Endothelial cell of umbilical vein (primary cell): ENCODE measurements at regions of chr12 and their contacts with region 1.

Region 1: GRCh38 chr12:30795410-30796312 is 40.9 kb upstream of the CAPRIN2 start:
- DNase-seq: peak; percentile 80
- H3K4me3 ChIP-seq: peak overlapping the region; percentile 16 to 76 (median 56)
- H3K27ac ChIP-seq: peak overlapping the region; percentile 97
- H3K4me1 ChIP-seq: peaks cover 39% of the 10 kb centered on the region
- H3K27me3 ChIP-seq: no peaks in the 10 kb centered on the region
- CTCF ChIP-seq: peak in 1 of 2 donors; percentile 14
- POLR2A ChIP-seq: peak; percentile 83

Region 2: DNA sequence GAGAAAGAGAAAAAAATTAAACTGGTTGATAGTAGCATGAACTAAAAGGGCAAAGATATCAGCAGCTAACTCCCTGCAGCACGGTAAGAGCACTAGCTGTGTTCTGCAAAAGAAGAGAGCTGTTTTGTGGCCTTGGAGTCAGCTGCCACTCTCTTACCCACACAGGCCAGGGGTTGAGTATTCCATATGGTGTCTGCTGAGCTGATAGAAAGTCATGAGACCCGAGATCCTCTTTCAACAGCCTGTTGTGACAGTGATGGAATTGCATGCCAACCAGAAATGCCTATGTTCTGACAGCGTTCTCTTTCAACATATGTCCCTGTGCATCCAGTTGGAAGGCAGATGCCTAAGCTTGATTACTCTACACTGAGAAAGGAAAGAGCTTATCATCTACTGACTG is 1051.9 kb before region 1 on chr12:
- CTCF ChIA-PET with region 1: no interaction called
- POLR2A ChIA-PET with region 1: no interaction called
- dilution Hi-C with region 1: no loop called
- intact Hi-C with region 1: loop called (anchors 5 kb)
- DNase-seq: peak; percentile 39
- H3K4me3 ChIP-seq: no peak overlapping the region
- H3K27ac ChIP-seq: no peak overlapping the region
- H3K4me1 ChIP-seq: peaks cover 19% of the 10 kb centered on the region
- H3K27me3 ChIP-seq: no peaks in the 10 kb centered on the region
- CTCF ChIP-seq: no peak
- POLR2A ChIP-seq: no peak

Region 3: DNA sequence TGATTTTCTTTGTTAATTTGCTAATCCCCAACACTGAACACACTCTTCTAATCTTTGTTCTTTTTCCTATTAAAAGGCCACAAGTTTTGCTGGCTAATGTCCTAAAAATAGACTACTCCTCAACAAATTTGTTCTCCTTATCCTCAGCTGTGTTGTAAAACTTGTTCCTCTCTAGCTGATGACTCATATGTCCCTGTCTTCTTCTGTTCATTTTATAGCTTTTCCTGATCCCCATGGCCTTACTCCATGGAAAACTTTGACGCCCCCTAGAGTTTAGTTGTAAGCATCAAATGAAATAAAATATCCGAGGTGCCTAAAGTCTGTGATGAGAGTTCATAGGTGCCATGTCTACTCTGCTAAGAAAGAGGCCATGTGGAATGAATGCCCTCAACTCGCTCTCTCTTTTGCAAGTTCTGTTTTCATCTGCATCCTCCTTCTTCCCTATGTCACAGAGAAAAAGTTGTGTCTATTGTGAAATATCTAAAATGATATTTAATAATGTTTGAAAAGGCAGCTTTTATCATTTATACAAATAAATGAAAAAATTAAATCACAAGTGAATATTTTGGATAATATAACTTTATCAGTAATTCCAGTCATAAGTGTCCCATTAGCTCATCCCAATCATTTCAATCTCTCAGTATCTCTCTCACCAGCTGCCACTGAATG is 337.9 kb before region 1 on chr12:
- CTCF ChIA-PET with region 1: interaction called, 3 read pairs
- POLR2A ChIA-PET with region 1: interaction called, 6 read pairs
- dilution Hi-C with region 1: no loop called
- intact Hi-C with region 1: loop called (anchors 10 kb)
- DNase-seq: peak; percentile 75
- H3K4me3 ChIP-seq: no peak overlapping the region
- H3K27ac ChIP-seq: no peak overlapping the region
- H3K4me1 ChIP-seq: no peaks in the 10 kb centered on the region
- H3K27me3 ChIP-seq: no peaks in the 10 kb centered on the region
- CTCF ChIP-seq: peak; percentile 23 to 35
- POLR2A ChIP-seq: no peak

Region 4: GRCh38 chr12:30725739-30726138 is 69.9 kb before region 1 on chr12:
- CTCF ChIA-PET with region 1: interaction called, 8 read pairs
- POLR2A ChIA-PET with region 1: no interaction called
- dilution Hi-C with region 1: no loop called
- intact Hi-C with region 1: loop called (anchors 2 kb)
- DNase-seq: peak; percentile 73
- H3K4me3 ChIP-seq: no peak overlapping the region
- H3K27ac ChIP-seq: peak overlapping the region; percentile 28
- H3K4me1 ChIP-seq: peaks cover 18% of the 10 kb centered on the region
- H3K27me3 ChIP-seq: no peaks in the 10 kb centered on the region
- CTCF ChIP-seq: no peak
- POLR2A ChIP-seq: no peak